Naive thymus-derived CD4-positive, alpha-beta T cell (primary cell): ENCODE measurements at regions of chr20 and their contacts with region 1.

Region 1: GRCh38 chr20:23050847-23051631 is 1.6 kb upstream of the THBD start:
- DNase-seq: peak in 2 of 9 donors; percentile 20 to 51
- ATAC-seq: peak; percentile 49
- H3K4me3 ChIP-seq: no peak overlapping the region
- H3K4me3 Mint-ChIP-seq: peak overlapping the region in 2 of 10 donors; percentile 44 to 52
- H3K27ac ChIP-seq: no peak overlapping the region
- H3K27ac Mint-ChIP-seq: no peak overlapping the region
- H3K4me1 ChIP-seq: no peaks in the 10 kb centered on the region
- H3K4me1 Mint-ChIP-seq: peaks cover 0 to 15% (median 6%) of the 10 kb centered on the region in 7 donors
- H3K27me3 ChIP-seq: peaks cover 0 to 2% of the 10 kb centered on the region in 2 donors
- H3K27me3 Mint-ChIP-seq: peaks cover 34 to 68% (median 53%) of the 10 kb centered on the region in 5 donors

Region 2: DNA sequence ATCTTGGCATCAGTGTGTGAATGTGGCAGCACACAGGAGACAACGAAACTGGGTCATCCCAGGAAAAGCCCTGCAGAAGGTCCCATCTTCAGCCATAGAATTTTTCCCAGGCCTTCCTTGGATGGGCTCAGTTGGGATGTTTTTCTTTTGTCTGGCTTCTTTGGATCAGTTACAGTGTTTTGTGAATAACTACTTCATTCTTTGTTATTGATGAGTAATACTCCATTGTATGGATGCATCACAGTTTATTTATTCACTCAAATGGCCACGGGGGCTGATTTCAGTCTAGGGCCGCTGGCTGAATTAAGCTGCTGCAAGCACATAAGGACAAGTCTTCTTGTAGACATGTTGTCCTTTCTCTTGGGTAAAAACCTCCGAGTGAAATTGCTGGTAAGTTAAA is 116.4 kb after region 1 on chr20:
- CTCF ChIA-PET with region 1: no interaction called
- POLR2A ChIA-PET with region 1: no interaction called
- intact Hi-C with region 1: no loop called
- DNase-seq: no peak
- ATAC-seq: no peak
- H3K4me3 ChIP-seq: no peak overlapping the region
- H3K4me3 Mint-ChIP-seq: no peak overlapping the region
- H3K27ac ChIP-seq: no peak overlapping the region
- H3K27ac Mint-ChIP-seq: no peak overlapping the region
- H3K4me1 ChIP-seq: no peaks in the 10 kb centered on the region
- H3K4me1 Mint-ChIP-seq: no peaks in the 10 kb centered on the region
- H3K27me3 ChIP-seq: no peaks in the 10 kb centered on the region
- H3K27me3 Mint-ChIP-seq: peaks cover 0 to 26% (median 3%) of the 10 kb centered on the region in 5 donors

Region 3: DNA sequence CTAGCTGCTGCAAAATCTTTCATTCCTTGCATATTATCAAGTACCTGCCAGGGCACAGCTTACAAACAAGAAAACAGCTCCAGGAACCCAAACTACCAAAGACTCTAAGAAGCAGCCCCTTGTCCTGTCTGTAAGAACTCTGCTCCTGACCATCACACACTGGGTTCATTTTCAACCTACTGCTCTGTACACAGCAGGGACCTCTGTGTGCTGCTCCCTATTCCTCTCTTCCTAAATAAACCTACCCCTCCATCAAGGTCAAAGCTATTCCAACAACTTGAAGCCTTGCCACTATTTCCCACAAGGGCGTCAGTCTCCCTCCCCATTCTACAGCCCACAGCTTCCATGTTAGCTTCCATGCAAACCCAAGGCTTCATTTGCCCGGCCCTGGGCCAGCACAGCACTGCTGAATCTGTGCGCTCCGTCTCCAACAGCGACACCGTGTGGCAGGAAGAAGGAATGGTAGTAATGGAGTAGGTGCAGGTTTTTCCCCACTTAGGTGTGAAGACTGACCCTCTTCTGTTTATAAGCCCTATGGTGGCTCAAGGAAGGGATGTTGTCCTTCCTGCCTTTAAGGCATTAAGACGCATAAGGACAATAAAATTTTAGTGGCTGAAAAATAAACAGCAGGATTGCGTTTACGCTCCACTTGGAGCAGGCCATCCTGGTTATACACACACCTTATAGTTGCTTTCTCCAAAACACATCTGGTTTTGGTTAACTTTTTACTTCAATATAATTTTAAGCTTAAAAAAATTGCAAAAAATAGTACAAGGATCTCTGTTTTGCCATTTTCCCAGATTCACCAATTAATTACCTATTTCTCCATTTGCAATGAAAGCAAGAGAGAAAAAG is 184.4 kb after region 1 on chr20:
- CTCF ChIA-PET with region 1: no interaction called
- POLR2A ChIA-PET with region 1: no interaction called
- intact Hi-C with region 1: loop called in 1 of 2 experiments (anchors 2 kb)
- DNase-seq: peak in 2 of 9 donors; percentile 18 to 51
- ATAC-seq: peak; percentile 67
- H3K4me3 ChIP-seq: no peak overlapping the region
- H3K4me3 Mint-ChIP-seq: no peak overlapping the region
- H3K27ac ChIP-seq: no peak overlapping the region
- H3K27ac Mint-ChIP-seq: no peak overlapping the region
- H3K4me1 ChIP-seq: no peaks in the 10 kb centered on the region
- H3K4me1 Mint-ChIP-seq: peaks cover 0 to 4% (median 0%) of the 10 kb centered on the region in 7 donors
- H3K27me3 ChIP-seq: no peaks in the 10 kb centered on the region
- H3K27me3 Mint-ChIP-seq: peaks cover 8 to 26% (median 9%) of the 10 kb centered on the region in 5 donors